Activated B cell treated with CpG ODN at 0.5 μM for 24 hours (primary cell): ENCODE measurements at regions of chr7 and their contacts with region 1.

Region 1: GRCh38 chr7:106552645-106553445 is 108.1 kb downstream of the CCDC71L start:
- DNase-seq: peak; percentile 27
- ATAC-seq: peak; percentile 92
- H3K4me3 Mint-ChIP-seq: peak overlapping the region; percentile 39
- H3K27ac Mint-ChIP-seq: peak overlapping the region; percentile 89
- H3K4me1 Mint-ChIP-seq: peaks cover 39% of the 10 kb centered on the region
- H3K27me3 Mint-ChIP-seq: no peaks in the 10 kb centered on the region
- CTCF ChIP-seq: no peak

Region 2: GRCh38 chr7:106485031-106485551 is 67.8 kb before region 1 on chr7:
- CTCF ChIA-PET with region 1: no interaction called
- POLR2A ChIA-PET with region 1: no interaction called
- intact Hi-C with region 1: no loop called
- DNase-seq: no peak
- ATAC-seq: peak; percentile 18
- H3K4me3 Mint-ChIP-seq: no peak overlapping the region
- H3K27ac Mint-ChIP-seq: no peak overlapping the region
- H3K4me1 Mint-ChIP-seq: no peaks in the 10 kb centered on the region
- H3K27me3 Mint-ChIP-seq: peaks cover 15% of the 10 kb centered on the region
- CTCF ChIP-seq: no peak

Region 3: DNA sequence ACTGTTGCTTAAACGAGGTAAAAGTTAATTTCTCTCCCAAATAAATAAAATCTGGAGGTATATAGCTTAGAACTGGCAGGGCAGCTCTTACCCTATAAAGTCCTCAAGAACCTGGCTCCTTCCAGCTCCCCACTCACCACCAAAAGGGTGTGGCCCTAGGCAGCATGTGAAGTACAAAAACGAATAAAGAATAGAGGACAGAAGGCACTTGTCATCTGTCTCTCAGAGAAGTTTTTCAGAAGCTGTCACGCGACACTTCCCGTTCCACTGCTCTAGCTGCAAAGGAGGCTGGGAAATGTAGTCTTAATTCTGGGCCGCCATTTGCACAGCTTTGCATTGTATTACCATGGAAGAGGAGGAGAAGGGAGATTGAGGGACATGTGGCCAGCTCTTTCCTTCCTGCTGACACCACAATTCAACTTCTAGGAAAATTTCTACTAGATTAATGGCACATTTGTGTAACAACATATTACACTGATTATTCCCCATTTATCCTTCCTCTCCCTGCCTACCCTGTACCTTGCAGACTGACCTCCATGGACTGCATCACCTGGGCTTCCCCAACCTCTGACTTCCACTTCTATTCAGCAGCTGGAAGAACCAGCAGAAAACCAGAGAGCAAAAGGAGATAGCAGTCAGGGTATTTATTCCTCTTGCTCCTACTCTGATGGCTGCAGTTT is 46.0 kb after region 1 on chr7:
- CTCF ChIA-PET with region 1: no interaction called
- POLR2A ChIA-PET with region 1: no interaction called
- intact Hi-C with region 1: loop called (anchors 1 kb)
- DNase-seq: peak; percentile 34
- ATAC-seq: peak; percentile 100
- H3K4me3 Mint-ChIP-seq: peak overlapping the region; percentile 52
- H3K27ac Mint-ChIP-seq: peak overlapping the region; percentile 68
- H3K4me1 Mint-ChIP-seq: peaks cover 6% of the 10 kb centered on the region
- H3K27me3 Mint-ChIP-seq: no peaks in the 10 kb centered on the region
- CTCF ChIP-seq: no peak

Region 4: GRCh38 chr7:106640368-106641141 is 87.7 kb after region 1 on chr7:
- CTCF ChIA-PET with region 1: no interaction called
- POLR2A ChIA-PET with region 1: no interaction called
- intact Hi-C with region 1: no loop called
- DNase-seq: no peak
- ATAC-seq: no peak
- H3K4me3 Mint-ChIP-seq: no peak overlapping the region
- H3K27ac Mint-ChIP-seq: no peak overlapping the region
- H3K4me1 Mint-ChIP-seq: peaks cover 23% of the 10 kb centered on the region
- H3K27me3 Mint-ChIP-seq: peaks cover under 1% of the 10 kb centered on the region
- CTCF ChIP-seq: no peak